ENCODE measurements at regions of chr3 and their contacts with region 1.

Region 1: DNA sequence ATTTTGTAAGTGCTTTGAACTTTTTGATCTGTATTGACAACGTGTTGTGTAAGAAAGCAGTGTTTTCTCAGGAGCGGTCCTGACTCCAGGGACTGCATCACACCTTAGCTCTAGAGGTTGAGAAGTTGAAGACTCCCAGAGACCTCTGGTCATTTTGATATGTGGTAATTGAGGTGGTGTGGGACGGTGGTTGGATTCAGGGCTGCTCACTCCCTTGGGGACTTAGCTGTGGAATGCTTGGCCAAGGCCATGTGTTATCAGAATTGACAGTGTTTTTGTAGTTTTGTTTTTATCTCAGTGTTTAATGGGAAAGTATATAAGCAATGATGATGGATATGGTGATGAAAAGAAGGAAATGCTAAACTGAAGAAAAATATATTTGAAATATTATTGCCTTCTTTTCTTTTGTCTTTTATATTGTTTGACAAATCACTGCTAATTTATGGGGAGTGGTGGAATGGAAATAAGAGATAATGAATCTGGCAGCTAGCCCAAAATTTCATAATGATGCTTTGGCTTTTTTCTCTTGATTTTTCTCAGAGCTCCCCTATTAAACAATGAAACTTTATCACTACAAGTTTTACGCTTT is 16.0 kb downstream of the CMSS1 start:
- DNase-seq: no peak
- ATAC-seq: no peak
- H3K4me3 ChIP-seq: no peak overlapping the region
- H3K4me3 Mint-ChIP-seq: no peak overlapping the region
- H3K27ac ChIP-seq: no peak overlapping the region
- H3K27ac Mint-ChIP-seq: no peak overlapping the region
- H3K4me1 ChIP-seq: no peaks in the 10 kb centered on the region
- H3K4me1 Mint-ChIP-seq: no peaks in the 10 kb centered on the region
- H3K27me3 ChIP-seq: no peaks in the 10 kb centered on the region
- H3K27me3 Mint-ChIP-seq: no peaks in the 10 kb centered on the region
- CTCF ChIP-seq: no peak

Region 2: GRCh38 chr3:99651561-99651960 is 182.2 kb before region 1 on chr3:
- CTCF ChIA-PET with region 1: no interaction called
- POLR2A ChIA-PET with region 1: no interaction called
- intact Hi-C with region 1: no loop called
- DNase-seq: no peak
- ATAC-seq: no peak
- H3K4me3 ChIP-seq: no peak overlapping the region
- H3K4me3 Mint-ChIP-seq: no peak overlapping the region
- H3K27ac ChIP-seq: no peak overlapping the region
- H3K27ac Mint-ChIP-seq: no peak overlapping the region
- H3K4me1 ChIP-seq: no peaks in the 10 kb centered on the region
- H3K4me1 Mint-ChIP-seq: no peaks in the 10 kb centered on the region
- H3K27me3 ChIP-seq: no peaks in the 10 kb centered on the region
- H3K27me3 Mint-ChIP-seq: no peaks in the 10 kb centered on the region
- CTCF ChIP-seq: no peak

Region 3: GRCh38 chr3:99783009-99783573 is 50.6 kb before region 1 on chr3:
- CTCF ChIA-PET with region 1: no interaction called
- POLR2A ChIA-PET with region 1: no interaction called
- intact Hi-C with region 1: no loop called
- DNase-seq: no peak
- ATAC-seq: no peak
- H3K4me3 ChIP-seq: no peak overlapping the region
- H3K4me3 Mint-ChIP-seq: no peak overlapping the region
- H3K27ac ChIP-seq: no peak overlapping the region
- H3K27ac Mint-ChIP-seq: no peak overlapping the region
- H3K4me1 ChIP-seq: no peaks in the 10 kb centered on the region
- H3K4me1 Mint-ChIP-seq: peaks cover 5% of the 10 kb centered on the region
- H3K27me3 ChIP-seq: no peaks in the 10 kb centered on the region
- H3K27me3 Mint-ChIP-seq: peaks cover 30% of the 10 kb centered on the region
- CTCF ChIP-seq: no peak

Region 4: GRCh38 chr3:99862208-99862607 is 28.5 kb after region 1 on chr3:
- CTCF ChIA-PET with region 1: no interaction called
- POLR2A ChIA-PET with region 1: no interaction called
- intact Hi-C with region 1: no loop called
- DNase-seq: no peak
- ATAC-seq: no peak
- H3K4me3 ChIP-seq: no peak overlapping the region
- H3K4me3 Mint-ChIP-seq: no peak overlapping the region
- H3K27ac ChIP-seq: no peak overlapping the region
- H3K27ac Mint-ChIP-seq: no peak overlapping the region
- H3K4me1 ChIP-seq: peaks cover 6% of the 10 kb centered on the region
- H3K4me1 Mint-ChIP-seq: peaks cover 29% of the 10 kb centered on the region
- H3K27me3 ChIP-seq: no peaks in the 10 kb centered on the region
- H3K27me3 Mint-ChIP-seq: no peaks in the 10 kb centered on the region
- CTCF ChIP-seq: no peak

Region 5: DNA sequence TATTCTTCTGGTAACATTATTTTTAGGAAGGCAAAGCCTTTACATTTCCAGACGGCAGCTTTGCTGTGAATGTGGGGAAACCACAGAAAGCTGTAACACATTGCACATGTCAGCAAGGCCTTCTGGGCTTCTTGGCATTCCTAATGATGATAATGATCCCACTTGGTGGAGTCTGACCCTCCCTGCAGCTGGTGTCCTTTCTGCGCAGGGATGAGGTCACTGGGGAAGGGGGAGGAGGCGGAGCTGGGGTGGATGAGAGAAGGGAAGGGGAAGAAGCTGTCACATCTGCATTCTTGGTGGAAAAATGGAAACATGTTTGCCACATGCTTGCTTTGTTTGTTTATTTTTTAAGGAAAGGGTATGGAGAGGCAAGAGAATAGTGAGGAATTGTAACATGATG is 212.0 kb after region 1 on chr3:
- CTCF ChIA-PET with region 1: no interaction called
- POLR2A ChIA-PET with region 1: no interaction called
- intact Hi-C with region 1: no loop called
- DNase-seq: peak in 2 of 14 experiments; percentile 13 to 17
- ATAC-seq: no peak
- H3K4me3 ChIP-seq: no peak overlapping the region
- H3K4me3 Mint-ChIP-seq: no peak overlapping the region
- H3K27ac ChIP-seq: no peak overlapping the region
- H3K27ac Mint-ChIP-seq: no peak overlapping the region
- H3K4me1 ChIP-seq: no peaks in the 10 kb centered on the region
- H3K4me1 Mint-ChIP-seq: no peaks in the 10 kb centered on the region
- H3K27me3 ChIP-seq: no peaks in the 10 kb centered on the region
- H3K27me3 Mint-ChIP-seq: no peaks in the 10 kb centered on the region
- CTCF ChIP-seq: no peak

Region 6: GRCh38 chr3:100254168-100254777 is 420.6 kb after region 1 on chr3:
- CTCF ChIA-PET with region 1: interaction called, 8 read pairs
- POLR2A ChIA-PET with region 1: no interaction called
- intact Hi-C with region 1: loop called in 1 of 2 experiments (anchors 2 kb)
- DNase-seq: peak in 5 of 14 experiments; percentile 11 to 64 (median 37)
- ATAC-seq: peak; percentile 43
- H3K4me3 ChIP-seq: no peak overlapping the region
- H3K4me3 Mint-ChIP-seq: no peak overlapping the region
- H3K27ac ChIP-seq: no peak overlapping the region
- H3K27ac Mint-ChIP-seq: no peak overlapping the region
- H3K4me1 ChIP-seq: no peaks in the 10 kb centered on the region
- H3K4me1 Mint-ChIP-seq: peaks cover 9% of the 10 kb centered on the region
- H3K27me3 ChIP-seq: no peaks in the 10 kb centered on the region
- H3K27me3 Mint-ChIP-seq: no peaks in the 10 kb centered on the region
- CTCF ChIP-seq: peak; percentile 50

Measured in CD4-positive, alpha-beta T cell (primary cell).